Vagina (tissue), 2 donors: ENCODE measurements at regions of chr1 and their contacts with region 1.

Region 1: GRCh38 chr1:231337472-231338269 is at the start of gene EXOC8:
- DNase-seq: peak; percentile 96 to 98
- H3K4me3 ChIP-seq: peak within 1 kb of the TSS; percentile 72 to 95
- H3K27ac ChIP-seq: peak within 1 kb of the TSS; percentile 77
- H3K4me1 ChIP-seq: peaks cover 66% of the 10 kb centered on the region
- H3K27me3 ChIP-seq: no peaks in the 10 kb centered on the region
- CTCF ChIP-seq: no peak
- POLR2A ChIP-seq: peak in 1 of 2 donors; percentile 81
- total RNA-seq, gene EXOC8: 11.5 TPM

Region 2: DNA sequence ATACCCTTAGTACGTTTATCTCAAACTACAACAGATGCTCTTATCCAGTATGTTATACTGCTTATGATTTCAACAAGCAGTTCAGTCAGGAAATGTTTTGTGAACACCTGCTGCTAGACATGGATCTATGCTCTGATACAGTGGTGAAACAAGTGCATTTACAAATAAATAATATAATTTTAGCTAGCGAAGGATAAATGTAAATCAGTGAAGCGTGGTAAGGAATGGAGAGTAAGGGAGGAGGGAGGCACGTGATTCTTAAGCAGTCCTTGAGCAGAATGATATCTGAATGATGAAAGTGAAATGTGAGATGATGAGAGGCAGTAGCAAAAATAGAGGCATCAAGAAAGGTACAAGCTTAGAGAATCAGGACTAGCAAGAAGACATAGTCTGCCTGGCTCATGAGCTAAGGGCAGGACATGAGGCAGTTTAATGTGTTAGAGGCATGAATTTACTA is 197.1 kb after region 1 on chr1:
- intact Hi-C with region 1: loop called (anchors 10 kb)
- DNase-seq: no peak
- H3K4me3 ChIP-seq: no peak overlapping the region
- H3K27ac ChIP-seq: no peak overlapping the region
- H3K4me1 ChIP-seq: peaks cover 51% of the 10 kb centered on the region
- H3K27me3 ChIP-seq: no peaks in the 10 kb centered on the region
- CTCF ChIP-seq: no peak
- POLR2A ChIP-seq: no peak